MCF 10A (cell line): ENCODE measurements at regions of chr6 and their contacts with region 1.

Region 1: DNA sequence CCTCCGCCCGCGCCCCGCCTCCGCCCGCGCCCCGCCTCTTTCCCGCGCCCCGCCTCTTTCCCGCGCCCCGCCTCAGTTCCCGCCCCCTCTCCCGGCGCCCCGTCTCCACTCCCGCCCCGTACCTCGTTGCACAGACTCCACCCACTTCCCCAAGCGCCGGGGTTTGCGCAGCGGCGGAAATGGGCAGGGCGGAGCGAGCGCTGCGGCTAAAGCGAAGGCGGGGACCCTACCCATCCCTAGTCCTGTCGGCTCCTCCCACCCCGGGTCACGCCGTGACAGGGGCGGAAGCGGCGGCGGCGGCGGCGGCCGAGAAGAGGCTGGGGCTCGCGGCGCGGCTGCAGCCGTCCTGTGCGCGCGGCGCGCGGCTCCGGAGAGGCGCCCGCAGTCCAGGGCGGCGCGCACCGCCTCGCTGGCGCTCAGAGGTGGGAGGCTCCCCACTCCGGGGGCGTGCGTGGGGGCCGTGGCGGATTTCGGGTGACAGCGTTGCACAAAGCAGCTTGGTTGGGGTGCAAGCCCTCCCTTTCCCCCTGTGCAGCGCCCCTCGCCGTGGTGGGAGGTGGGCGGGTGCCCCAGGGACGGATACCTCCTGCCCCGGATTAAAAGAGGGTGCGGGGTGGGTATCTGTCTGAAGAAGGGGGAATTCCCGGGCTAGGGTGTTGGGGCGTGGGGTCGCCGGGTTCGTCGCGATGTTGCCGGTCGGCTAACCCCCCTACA is at the start of gene KDM1B:
- DNase-seq: peak; percentile 97
- H3K4me3 Mint-ChIP-seq: peak within 1 kb of the TSS; percentile 94
- H3K27ac Mint-ChIP-seq: peak within 1 kb of the TSS; percentile 97
- H3K4me1 Mint-ChIP-seq: peaks cover 15% of the 10 kb centered on the region
- H3K27me3 Mint-ChIP-seq: no peaks in the 10 kb centered on the region
- CTCF ChIP-seq: no peak
- total RNA-seq, gene KDM1B: 21.2 and 22.3 TPM in 2 replicates

Region 2: GRCh38 chr6:17865798-17866725 is 289.2 kb before region 1 on chr6:
- CTCF ChIA-PET with region 1: no interaction called
- POLR2A ChIA-PET with region 1: interaction called, 21 read pairs
- intact Hi-C with region 1: loop called (anchors 1 kb)
- DNase-seq: peak; percentile 98
- H3K4me3 Mint-ChIP-seq: peak overlapping the region; percentile 33
- H3K27ac Mint-ChIP-seq: peak overlapping the region; percentile 94
- H3K4me1 Mint-ChIP-seq: peaks cover 53% of the 10 kb centered on the region
- H3K27me3 Mint-ChIP-seq: no peaks in the 10 kb centered on the region
- CTCF ChIP-seq: no peak

Region 3: GRCh38 chr6:17980329-17980728 is 175.0 kb before region 1 on chr6:
- CTCF ChIA-PET with region 1: interaction called, 3 read pairs
- POLR2A ChIA-PET with region 1: interaction called, 73 read pairs
- intact Hi-C with region 1: no loop called
- DNase-seq: no peak
- H3K4me3 Mint-ChIP-seq: peak overlapping the region; percentile 30
- H3K27ac Mint-ChIP-seq: peak overlapping the region; percentile 66
- H3K4me1 Mint-ChIP-seq: peaks cover 34% of the 10 kb centered on the region
- H3K27me3 Mint-ChIP-seq: no peaks in the 10 kb centered on the region
- CTCF ChIP-seq: no peak

Region 4: DNA sequence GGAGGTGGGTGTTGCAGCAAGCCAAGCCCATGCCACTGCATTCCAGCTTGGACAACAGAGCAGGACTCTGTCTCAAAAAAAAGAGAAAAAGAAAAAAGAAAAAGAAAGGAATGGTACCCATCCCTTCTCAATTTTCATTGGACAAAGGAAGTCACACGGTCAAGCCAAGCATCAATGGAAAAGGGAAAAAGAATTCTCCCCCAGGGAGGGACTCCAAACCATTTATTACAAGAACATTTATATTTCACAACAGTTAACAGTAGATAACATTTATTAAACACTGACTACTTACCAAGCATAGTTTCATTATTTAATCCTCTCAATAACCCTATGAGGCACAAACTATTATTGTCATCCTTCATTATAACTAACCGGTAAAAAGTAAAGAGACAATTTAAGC is 161.3 kb before region 1 on chr6:
- CTCF ChIA-PET with region 1: no interaction called
- POLR2A ChIA-PET with region 1: interaction called, 19 read pairs
- intact Hi-C with region 1: no loop called
- DNase-seq: no peak
- H3K4me3 Mint-ChIP-seq: no peak overlapping the region
- H3K27ac Mint-ChIP-seq: peak overlapping the region; percentile 64
- H3K4me1 Mint-ChIP-seq: peaks cover 13% of the 10 kb centered on the region
- H3K27me3 Mint-ChIP-seq: no peaks in the 10 kb centered on the region
- CTCF ChIP-seq: no peak

Region 5: GRCh38 chr6:18242062-18242851 is 87.0 kb after region 1 on chr6:
- CTCF ChIA-PET with region 1: no interaction called
- POLR2A ChIA-PET with region 1: interaction called, 13 read pairs
- intact Hi-C with region 1: no loop called
- DNase-seq: peak; percentile 88
- H3K4me3 Mint-ChIP-seq: no peak overlapping the region
- H3K27ac Mint-ChIP-seq: peak overlapping the region; percentile 93
- H3K4me1 Mint-ChIP-seq: peaks cover 23% of the 10 kb centered on the region
- H3K27me3 Mint-ChIP-seq: no peaks in the 10 kb centered on the region
- CTCF ChIP-seq: no peak